Heart right ventricle (tissue), 16 donors: ENCODE measurements at regions of chrX and their contacts with region 1.

Region 1: DNA sequence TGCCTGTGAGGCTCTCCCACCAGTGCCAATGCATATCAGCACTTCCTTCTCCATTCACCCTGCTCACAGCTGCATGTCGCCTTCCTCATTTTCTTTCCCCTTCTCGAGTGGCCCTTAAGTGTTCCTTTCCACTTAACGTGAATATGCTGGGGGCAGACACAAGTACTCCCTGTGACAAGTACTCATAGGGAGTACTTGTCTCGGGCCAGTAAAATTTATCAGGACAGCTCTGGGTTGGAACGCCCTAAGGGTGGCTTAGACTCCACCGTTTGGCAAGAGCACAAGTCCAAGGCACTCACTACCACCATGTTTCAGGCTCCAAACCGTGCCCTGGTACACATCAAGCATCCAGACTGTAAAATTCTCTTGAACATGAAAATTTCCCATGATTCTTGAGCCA is 3.9 kb upstream of the LDOC1 start:
- DNase-seq: no peak
- ATAC-seq: no peak
- H3K4me3 ChIP-seq: no peak overlapping the region
- H3K27ac ChIP-seq: no peak overlapping the region
- H3K4me1 ChIP-seq: no peaks in the 10 kb centered on the region
- H3K27me3 ChIP-seq: peaks cover 0 to 12% (median 0%) of the 10 kb centered on the region in 7 donors
- CTCF ChIP-seq: no peak

Region 2: GRCh38 chrX:141164406-141164805 is 16.4 kb before region 1 on chrX:
- intact Hi-C with region 1: loop called in 1 of 10 experiments (anchors 1 kb)
- DNase-seq: no peak
- ATAC-seq: no peak
- H3K4me3 ChIP-seq: no peak overlapping the region
- H3K27ac ChIP-seq: no peak overlapping the region
- H3K4me1 ChIP-seq: no peaks in the 10 kb centered on the region
- H3K27me3 ChIP-seq: no peaks in the 10 kb centered on the region
- CTCF ChIP-seq: no peak